ENCODE measurements at regions of chr15 and their contacts with region 1.

Region 1: DNA sequence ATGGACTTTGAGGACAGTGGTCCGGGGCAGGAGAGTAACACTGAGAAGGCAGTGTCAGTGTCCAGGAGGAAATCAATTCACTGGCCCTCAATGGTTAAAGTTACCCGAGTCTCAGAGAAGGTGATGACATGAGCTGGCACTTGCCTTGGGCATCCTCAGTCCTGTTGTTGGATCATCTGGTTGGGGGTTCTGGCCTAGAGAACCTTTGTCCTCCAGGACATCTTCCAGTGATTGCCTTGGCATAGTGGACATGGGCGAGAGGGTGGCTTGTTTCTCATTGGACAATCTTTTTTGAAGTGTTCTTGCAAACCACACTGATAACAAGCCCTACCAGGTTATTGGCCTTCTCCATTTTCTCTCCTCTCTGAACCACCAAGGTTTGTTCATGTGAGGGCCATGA is 83.4 kb upstream of the TERB2 start:
- DNase-seq: no peak
- H3K4me3 Mint-ChIP-seq: no peak overlapping the region
- H3K27ac Mint-ChIP-seq: no peak overlapping the region
- H3K4me1 Mint-ChIP-seq: no peaks in the 10 kb centered on the region
- H3K27me3 Mint-ChIP-seq: peaks cover 3% of the 10 kb centered on the region

Region 2: GRCh38 chr15:44861439-44861910 is 11.6 kb before region 1 on chr15:
- intact Hi-C with region 1: loop called (anchors 1 kb)
- DNase-seq: no peak
- H3K4me3 Mint-ChIP-seq: no peak overlapping the region
- H3K27ac Mint-ChIP-seq: no peak overlapping the region
- H3K4me1 Mint-ChIP-seq: no peaks in the 10 kb centered on the region
- H3K27me3 Mint-ChIP-seq: no peaks in the 10 kb centered on the region

Measured in activated T-helper 1 cell treated with anti-CD3 and anti-CD28 coated beads, Interleukin-12 subunit alpha, Interleukin-12 subunit beta, Interleukin-2, Interleukin-4 antibody, amounts not matched to agents 30 ng/mL and 10 ng/mL and 1 ng/mL, durations not matched to agents 14 hours and 24 hours and 36 hours (primary cell).